PC-9 (cell line): ENCODE measurements at regions of chr3 and their contacts with region 1.

Region 1: GRCh38 chr3:55620351-55621025 is 133.4 kb upstream of the WNT5A start:
- DNase-seq: peak; percentile 79 to 95
- H3K4me3 ChIP-seq: peak overlapping the region; percentile 21; the same call in 1 of the 2 replicates
- H3K27ac ChIP-seq: peak overlapping the region; percentile 100
- H3K4me1 ChIP-seq: peaks cover 82% of the 10 kb centered on the region
- H3K27me3 ChIP-seq: no peaks in the 10 kb centered on the region
- CTCF ChIP-seq: no peak

Region 2: GRCh38 chr3:55505776-55506175 is 114.7 kb before region 1 on chr3:
- CTCF ChIA-PET with region 1: interaction called, 4 read pairs
- POLR2A ChIA-PET with region 1: interaction called, 6 read pairs
- intact Hi-C with region 1: loop called (anchors 1 kb)
- DNase-seq: peak; percentile 44 to 66
- H3K4me3 ChIP-seq: no peak overlapping the region
- H3K27ac ChIP-seq: peak overlapping the region; percentile 29; the same call in 1 of the 2 replicates
- H3K4me1 ChIP-seq: no peaks in the 10 kb centered on the region
- H3K27me3 ChIP-seq: no peaks in the 10 kb centered on the region
- CTCF ChIP-seq: no peak